Activated T-helper 2 cell treated with anti-CD3 and anti-CD28 coated beads, Interferon-gamma antibody, Interleukin-2, Interleukin-4, amounts not matched to agents 10 μg/mL and 5 μg/mL and 100 μg/mL, durations not matched to agents 14 hours and 24 hours and 36 hours (primary cell): ENCODE measurements at regions of chr11 and their contacts with region 1.

Region 1: GRCh38 chr11:63478896-63479295 is 12.1 kb downstream of the PLAAT5 start:
- DNase-seq: peak; percentile 29
- H3K4me3 Mint-ChIP-seq: no peak overlapping the region
- H3K27ac Mint-ChIP-seq: no peak overlapping the region
- H3K4me1 Mint-ChIP-seq: peaks cover 3% of the 10 kb centered on the region
- H3K27me3 Mint-ChIP-seq: peaks cover 57% of the 10 kb centered on the region

Region 2: GRCh38 chr11:63508009-63508408 is 29.1 kb after region 1 on chr11:
- intact Hi-C with region 1: loop called (anchors 1 kb)
- DNase-seq: no peak
- H3K4me3 Mint-ChIP-seq: no peak overlapping the region
- H3K27ac Mint-ChIP-seq: no peak overlapping the region
- H3K4me1 Mint-ChIP-seq: peaks cover 8% of the 10 kb centered on the region
- H3K27me3 Mint-ChIP-seq: peaks cover 8% of the 10 kb centered on the region

Region 3: GRCh38 chr11:63553741-63554151 is 74.8 kb after region 1 on chr11:
- intact Hi-C with region 1: no loop called
- DNase-seq: peak; percentile 39
- H3K4me3 Mint-ChIP-seq: peak overlapping the region; percentile 63
- H3K27ac Mint-ChIP-seq: peak overlapping the region; percentile 89
- H3K4me1 Mint-ChIP-seq: peaks cover 44% of the 10 kb centered on the region
- H3K27me3 Mint-ChIP-seq: no peaks in the 10 kb centered on the region

Region 4: GRCh38 chr11:63635762-63636465 is 157.0 kb after region 1 on chr11:
- intact Hi-C with region 1: loop called (anchors 1 kb)
- DNase-seq: peak; percentile 50
- H3K4me3 Mint-ChIP-seq: no peak overlapping the region
- H3K27ac Mint-ChIP-seq: no peak overlapping the region
- H3K4me1 Mint-ChIP-seq: peaks cover 11% of the 10 kb centered on the region
- H3K27me3 Mint-ChIP-seq: no peaks in the 10 kb centered on the region

Region 5: GRCh38 chr11:63738720-63739360 is 259.9 kb after region 1 on chr11:
- intact Hi-C with region 1: loop called (anchors 2 kb)
- DNase-seq: peak; percentile 38
- H3K4me3 Mint-ChIP-seq: no peak overlapping the region
- H3K27ac Mint-ChIP-seq: no peak overlapping the region
- H3K4me1 Mint-ChIP-seq: peaks cover 2% of the 10 kb centered on the region
- H3K27me3 Mint-ChIP-seq: no peaks in the 10 kb centered on the region